Colonic mucosa (tissue), 4 donors: ENCODE measurements at regions of chr4 and their contacts with region 1.

Region 1: DNA sequence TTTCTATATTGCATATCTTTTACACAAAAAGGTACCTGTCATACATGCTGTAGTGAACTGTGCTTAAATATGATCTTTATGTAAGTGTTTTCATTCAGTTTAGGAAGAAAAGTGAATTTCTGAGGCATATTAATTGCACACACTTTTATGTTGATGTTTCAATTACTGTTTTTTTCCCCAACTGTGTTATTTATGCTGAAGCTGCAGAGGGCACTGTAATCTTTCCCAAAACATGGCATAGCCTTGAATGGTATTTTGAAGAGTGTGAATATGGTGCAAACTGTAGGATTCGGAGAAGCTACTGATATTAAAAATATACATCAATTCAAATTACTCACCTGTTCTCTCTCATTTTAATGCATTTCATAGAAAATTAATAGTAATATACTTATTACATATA is 6.0 kb upstream of the CENPE start:
- DNase-seq: no peak
- H3K4me3 ChIP-seq: no peak overlapping the region
- H3K27ac ChIP-seq: no peak overlapping the region
- H3K4me1 ChIP-seq: no peaks in the 10 kb centered on the region
- H3K27me3 ChIP-seq: no peaks in the 10 kb centered on the region
- CTCF ChIP-seq: no peak

Region 2: DNA sequence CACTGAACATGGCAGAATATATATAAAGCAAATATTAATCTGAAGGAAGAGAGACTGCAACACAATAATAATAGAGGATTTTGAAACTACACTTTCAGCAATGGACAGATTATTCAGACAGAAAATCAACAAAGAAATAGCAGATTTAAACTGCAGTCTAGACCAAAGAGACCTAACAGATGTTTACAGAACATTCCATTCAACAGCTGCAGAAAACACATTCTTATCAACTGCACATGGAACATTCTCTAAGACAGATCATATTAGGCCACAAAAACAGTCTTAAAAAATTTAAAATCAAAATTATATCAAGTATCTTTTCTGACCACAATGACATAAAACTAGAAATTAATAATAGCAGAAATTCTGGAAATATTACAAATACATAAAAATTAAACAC is 33.1 kb before region 1 on chr4:
- intact Hi-C with region 1: no loop called
- DNase-seq: no peak
- H3K4me3 ChIP-seq: no peak overlapping the region
- H3K27ac ChIP-seq: no peak overlapping the region
- H3K4me1 ChIP-seq: no peaks in the 10 kb centered on the region
- H3K27me3 ChIP-seq: no peaks in the 10 kb centered on the region
- CTCF ChIP-seq: no peak

Region 3: DNA sequence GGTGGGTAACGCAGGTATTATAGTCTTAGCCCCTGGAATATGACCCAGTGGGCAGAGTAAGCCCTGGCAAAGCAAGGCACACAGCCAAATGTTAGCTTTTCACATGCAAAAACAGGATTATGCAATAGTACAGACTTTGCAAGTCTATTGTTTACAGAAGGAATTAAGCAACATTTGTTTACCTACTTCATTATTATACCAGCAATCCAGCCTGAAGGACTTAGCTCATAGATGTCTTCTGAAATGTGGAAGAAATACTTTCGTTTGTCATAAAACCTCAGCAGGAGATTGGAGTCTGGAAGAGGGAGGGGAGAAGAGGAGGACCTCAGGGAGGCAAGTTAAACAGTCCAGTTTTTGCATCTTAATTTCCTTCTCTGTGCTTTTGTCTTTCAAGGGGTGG is 220.7 kb after region 1 on chr4:
- intact Hi-C with region 1: no loop called
- DNase-seq: no peak
- H3K4me3 ChIP-seq: no peak overlapping the region
- H3K27ac ChIP-seq: no peak overlapping the region
- H3K4me1 ChIP-seq: no peaks in the 10 kb centered on the region
- H3K27me3 ChIP-seq: no peaks in the 10 kb centered on the region
- CTCF ChIP-seq: no peak

Region 4: DNA sequence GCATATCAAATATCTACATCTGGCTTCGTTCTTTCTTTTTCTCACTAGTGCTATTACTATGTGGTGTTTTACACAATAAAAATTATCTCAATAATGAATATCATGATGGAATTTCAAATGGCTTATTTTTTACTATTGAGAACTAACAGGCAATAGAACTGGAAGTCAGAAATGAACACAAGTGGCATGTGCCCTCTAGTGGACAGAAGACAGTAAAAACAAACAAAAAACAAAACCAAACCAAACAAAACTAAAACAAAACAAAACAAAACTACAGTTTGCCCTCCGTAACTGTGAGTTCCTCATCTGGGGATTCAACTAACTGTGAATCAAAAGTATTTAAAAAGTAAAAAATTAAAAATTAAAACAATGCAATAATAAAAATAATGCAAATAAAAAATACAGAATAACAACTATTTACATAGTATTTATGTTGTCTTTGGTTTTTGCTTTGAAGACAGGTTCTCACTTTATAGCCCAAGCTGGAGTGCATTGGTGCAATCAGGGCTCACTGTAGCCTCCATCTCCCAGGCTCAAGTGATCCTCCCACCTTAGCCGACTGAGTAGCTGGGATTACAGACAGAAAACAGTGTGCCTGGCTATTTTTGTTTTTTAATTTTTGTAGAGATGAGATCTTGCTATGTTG is 711.2 kb after region 1 on chr4:
- intact Hi-C with region 1: loop called (anchors 10 kb)
- DNase-seq: no peak
- H3K4me3 ChIP-seq: no peak overlapping the region
- H3K27ac ChIP-seq: no peak overlapping the region
- H3K4me1 ChIP-seq: no peaks in the 10 kb centered on the region
- H3K27me3 ChIP-seq: no peaks in the 10 kb centered on the region
- CTCF ChIP-seq: no peak